ENCODE measurements at regions of chr15 and their contacts with region 1.

Region 1: GRCh38 chr15:83653639-83654378 is at the start of gene ADAMTSL3:
- DNase-seq: peak; percentile 80 to 90
- ATAC-seq: peak; percentile 34 to 82 (median 64)
- H3K4me3 ChIP-seq: peak within 1 kb of the TSS; percentile 38 to 72 (median 60)
- H3K27ac ChIP-seq: peak within 1 kb of the TSS; percentile 56 to 89 (median 85)
- H3K4me1 ChIP-seq: peaks cover 7 to 56% (median 20%) of the 10 kb centered on the region in 9 donors
- H3K27me3 ChIP-seq: peaks cover 0 to 36% (median 9%) of the 10 kb centered on the region in 7 donors
- CTCF ChIP-seq: peak in 3 of 9 donors; percentile 15 to 25 (median 24)
- total RNA-seq, gene ADAMTSL3: 4.3 to 15.4 (median 11.3) TPM

Region 2: GRCh38 chr15:83571820-83572707 is 81.7 kb before region 1 on chr15:
- intact Hi-C with region 1: loop called in 1 of 10 experiments (anchors 10 kb)
- DNase-seq: no peak
- ATAC-seq: no peak
- H3K4me3 ChIP-seq: no peak overlapping the region
- H3K27ac ChIP-seq: no peak overlapping the region
- H3K4me1 ChIP-seq: no peaks in the 10 kb centered on the region
- H3K27me3 ChIP-seq: peaks cover 0 to 4% (median 0%) of the 10 kb centered on the region in 7 donors
- CTCF ChIP-seq: peak; percentile 32 to 68 (median 61)

Region 3: DNA sequence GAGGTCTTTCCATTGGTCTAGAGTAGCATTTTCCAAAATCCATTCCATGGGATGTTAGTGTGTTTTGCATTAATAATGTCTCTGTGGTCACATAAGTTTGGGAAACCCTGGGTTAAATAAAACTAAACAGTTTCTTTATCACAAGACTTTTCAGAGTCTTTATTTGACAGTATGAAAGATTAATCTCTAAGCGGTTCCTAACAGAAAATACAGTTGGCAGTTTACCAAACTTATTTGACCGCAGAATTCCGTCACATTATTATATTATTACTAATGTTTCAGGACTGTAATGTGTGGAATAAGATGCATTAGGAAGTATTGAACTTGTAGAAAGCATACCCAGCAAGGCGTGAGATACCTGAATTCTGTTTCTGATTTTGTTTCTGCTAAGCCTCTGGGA is 71.4 kb before region 1 on chr15:
- intact Hi-C with region 1: loop called in 2 of 10 experiments (anchors 5 to 10 kb)
- DNase-seq: no peak
- ATAC-seq: no peak
- H3K4me3 ChIP-seq: no peak overlapping the region
- H3K27ac ChIP-seq: no peak overlapping the region
- H3K4me1 ChIP-seq: no peaks in the 10 kb centered on the region
- H3K27me3 ChIP-seq: no peaks in the 10 kb centered on the region
- CTCF ChIP-seq: no peak

Region 4: DNA sequence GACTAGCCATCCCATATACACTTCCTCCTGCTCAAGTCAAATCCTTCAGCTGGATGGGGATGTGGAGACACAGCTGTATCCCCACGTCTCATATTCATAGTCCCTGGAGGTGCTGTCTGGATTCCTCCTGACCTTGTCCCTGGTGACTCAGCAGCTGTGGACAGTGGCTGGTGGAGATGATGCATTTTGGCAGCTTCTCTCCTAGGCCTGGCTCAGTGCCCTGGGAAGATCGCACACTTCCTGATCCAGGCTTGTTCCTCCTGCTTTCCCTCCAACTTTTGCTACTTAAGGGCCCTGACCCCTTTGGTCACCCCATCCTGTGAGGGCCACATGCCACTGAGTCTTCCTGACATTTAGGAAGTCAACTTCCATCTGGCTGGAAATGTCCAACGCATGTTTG is 44.5 kb after region 1 on chr15:
- intact Hi-C with region 1: loop called in 3 of 10 experiments (anchors 1 to 5 kb)
- DNase-seq: peak; percentile 64 to 82
- ATAC-seq: peak; percentile 74 to 92 (median 80)
- H3K4me3 ChIP-seq: no peak overlapping the region
- H3K27ac ChIP-seq: peak overlapping the region in 4 of 10 donors; percentile 34 to 63 (median 50)
- H3K4me1 ChIP-seq: peaks cover 0 to 59% (median 26%) of the 10 kb centered on the region in 9 donors
- H3K27me3 ChIP-seq: no peaks in the 10 kb centered on the region
- CTCF ChIP-seq: no peak

Region 5: GRCh38 chr15:83837945-83838571 is 184.2 kb after region 1 on chr15:
- intact Hi-C with region 1: loop called in 3 of 10 experiments (anchors 5 to 10 kb)
- DNase-seq: peak in 1 of 2 donors; percentile 48
- ATAC-seq: peak in 2 of 8 donors; percentile 47 to 56
- H3K4me3 ChIP-seq: no peak overlapping the region
- H3K27ac ChIP-seq: no peak overlapping the region
- H3K4me1 ChIP-seq: peaks cover 0 to 22% (median 8%) of the 10 kb centered on the region in 9 donors
- H3K27me3 ChIP-seq: no peaks in the 10 kb centered on the region
- CTCF ChIP-seq: peak in 8 of 9 donors; percentile 31 to 60 (median 50)

Region 6: GRCh38 chr15:83848315-83849050 is 194.7 kb after region 1 on chr15:
- intact Hi-C with region 1: loop called in 2 of 10 experiments (anchors 10 kb)
- DNase-seq: no peak
- ATAC-seq: peak in 7 of 8 donors; percentile 44 to 70 (median 60)
- H3K4me3 ChIP-seq: no peak overlapping the region
- H3K27ac ChIP-seq: peak overlapping the region in 9 of 10 donors; percentile 6 to 77 (median 57)
- H3K4me1 ChIP-seq: peaks cover 0 to 59% (median 32%) of the 10 kb centered on the region in 9 donors
- H3K27me3 ChIP-seq: no peaks in the 10 kb centered on the region
- CTCF ChIP-seq: no peak

Measured in heart right ventricle (tissue), 16 donors.